ENCODE measurements at regions of chr12 and their contacts with region 1.

Region 1: GRCh38 chr12:57127710-57128533 is at the start of gene LRP1:
- DNase-seq: peak; percentile 78 to 87
- H3K4me3 ChIP-seq: peak within 1 kb of the TSS; percentile 63 to 82 (median 67)
- H3K27ac ChIP-seq: peak within 1 kb of the TSS; percentile 93 to 97
- H3K4me1 ChIP-seq: peaks cover 0 to 3% of the 10 kb centered on the region in 2 donors
- H3K27me3 ChIP-seq: no peaks in the 10 kb centered on the region
- CTCF ChIP-seq: no peak
- POLR2A ChIP-seq: peak; percentile 82
- total RNA-seq, gene LRP1: 102 to 894 (median 240) TPM

Region 2: GRCh38 chr12:56922031-56922430 is 205.9 kb before region 1 on chr12:
- intact Hi-C with region 1: no loop called
- DNase-seq: no peak
- H3K4me3 ChIP-seq: no peak overlapping the region
- H3K27ac ChIP-seq: no peak overlapping the region
- H3K4me1 ChIP-seq: no peaks in the 10 kb centered on the region
- H3K27me3 ChIP-seq: no peaks in the 10 kb centered on the region
- CTCF ChIP-seq: no peak
- POLR2A ChIP-seq: no peak

Region 3: GRCh38 chr12:57175428-57176138 is 47.7 kb after region 1 on chr12:
- intact Hi-C with region 1: loop called (anchors 1 kb)
- DNase-seq: peak; percentile 86 to 88
- H3K4me3 ChIP-seq: peak overlapping the region in 2 of 3 donors; percentile 22 to 50
- H3K27ac ChIP-seq: peak overlapping the region; percentile 56 to 74
- H3K4me1 ChIP-seq: no peaks in the 10 kb centered on the region
- H3K27me3 ChIP-seq: no peaks in the 10 kb centered on the region
- CTCF ChIP-seq: peak; percentile 77 to 87 (median 80)
- POLR2A ChIP-seq: no peak

Measured in breast epithelium (tissue), 4 donors.